ENCODE measurements at regions of chr1 and their contacts with region 1.

Region 1: DNA sequence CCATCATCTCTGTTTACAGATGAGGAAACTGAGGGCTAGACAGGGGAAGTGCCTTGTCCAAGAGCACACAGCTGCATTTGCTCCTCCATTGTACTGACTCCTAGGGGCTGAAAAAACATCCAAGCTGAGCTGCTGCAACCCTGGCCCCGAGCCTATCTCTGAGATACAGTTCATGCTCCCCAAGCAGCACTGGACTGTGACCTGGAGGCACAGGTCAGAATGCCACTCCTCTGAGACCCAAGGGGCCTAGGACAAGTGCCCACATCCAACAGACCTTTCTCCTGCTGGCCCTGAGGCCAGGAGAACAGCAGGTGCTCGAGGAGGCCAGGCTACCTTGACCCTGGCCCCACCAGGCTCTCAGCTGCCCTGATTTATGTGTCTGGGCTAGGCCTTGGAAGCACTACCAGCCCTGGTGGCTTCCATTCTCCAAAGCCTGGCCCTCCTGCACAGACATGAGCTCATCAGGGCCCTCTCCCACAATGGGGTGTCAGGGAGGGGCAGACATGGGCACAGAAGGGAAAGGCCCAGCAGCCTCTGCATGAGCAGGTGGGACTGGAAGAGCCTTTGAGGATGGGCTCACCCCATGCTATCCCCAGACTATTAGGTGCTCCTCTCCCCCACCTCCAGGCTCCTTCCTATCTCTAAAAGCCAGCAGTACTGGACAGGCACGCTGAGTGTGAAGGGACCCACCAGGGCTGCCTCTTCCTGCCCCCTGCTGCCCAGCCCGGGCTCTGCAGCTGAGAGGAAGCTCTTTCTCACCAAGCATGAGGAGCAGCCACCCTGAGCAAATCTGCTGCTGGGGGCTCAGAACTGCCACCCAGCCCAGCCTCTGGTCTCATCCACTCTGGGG is 18.8 kb downstream of the ADGRB2 start:
- DNase-seq: peak; percentile 55
- H3K4me3 ChIP-seq: no peak overlapping the region
- H3K27ac ChIP-seq: no peak overlapping the region
- H3K4me1 ChIP-seq: no peaks in the 10 kb centered on the region
- H3K27me3 ChIP-seq: peaks cover 0 to 4% of the 10 kb centered on the region in 2 experiments
- CTCF ChIP-seq: peak; percentile 77 to 92
- POLR2A ChIP-seq: no peak

Region 2: DNA sequence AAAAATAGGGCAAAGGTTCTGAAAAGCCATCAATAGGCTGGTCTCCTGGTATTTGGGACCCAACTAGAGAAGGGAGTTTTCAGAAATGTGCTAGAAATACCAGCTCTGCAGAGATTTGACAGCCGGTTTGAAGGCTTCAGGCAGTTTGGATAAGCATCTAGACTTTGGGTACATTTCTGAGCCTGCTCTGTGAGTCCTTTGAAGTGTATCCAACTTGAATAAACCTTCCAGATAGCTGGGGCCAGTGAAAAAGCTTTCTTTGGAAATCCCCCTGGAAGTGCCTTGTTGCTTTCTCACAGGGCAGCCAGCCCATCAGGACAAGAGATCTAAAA is 94.3 kb before region 1 on chr1:
- CTCF ChIA-PET with region 1: interaction called, 10 read pairs
- POLR2A ChIA-PET with region 1: no interaction called
- dilution Hi-C with region 1: no loop called
- intact Hi-C with region 1: no loop called
- DNase-seq: no peak
- H3K4me3 ChIP-seq: no peak overlapping the region
- H3K27ac ChIP-seq: no peak overlapping the region
- H3K4me1 ChIP-seq: no peaks in the 10 kb centered on the region
- H3K27me3 ChIP-seq: no peaks in the 10 kb centered on the region
- CTCF ChIP-seq: no peak
- POLR2A ChIP-seq: no peak

Region 3: DNA sequence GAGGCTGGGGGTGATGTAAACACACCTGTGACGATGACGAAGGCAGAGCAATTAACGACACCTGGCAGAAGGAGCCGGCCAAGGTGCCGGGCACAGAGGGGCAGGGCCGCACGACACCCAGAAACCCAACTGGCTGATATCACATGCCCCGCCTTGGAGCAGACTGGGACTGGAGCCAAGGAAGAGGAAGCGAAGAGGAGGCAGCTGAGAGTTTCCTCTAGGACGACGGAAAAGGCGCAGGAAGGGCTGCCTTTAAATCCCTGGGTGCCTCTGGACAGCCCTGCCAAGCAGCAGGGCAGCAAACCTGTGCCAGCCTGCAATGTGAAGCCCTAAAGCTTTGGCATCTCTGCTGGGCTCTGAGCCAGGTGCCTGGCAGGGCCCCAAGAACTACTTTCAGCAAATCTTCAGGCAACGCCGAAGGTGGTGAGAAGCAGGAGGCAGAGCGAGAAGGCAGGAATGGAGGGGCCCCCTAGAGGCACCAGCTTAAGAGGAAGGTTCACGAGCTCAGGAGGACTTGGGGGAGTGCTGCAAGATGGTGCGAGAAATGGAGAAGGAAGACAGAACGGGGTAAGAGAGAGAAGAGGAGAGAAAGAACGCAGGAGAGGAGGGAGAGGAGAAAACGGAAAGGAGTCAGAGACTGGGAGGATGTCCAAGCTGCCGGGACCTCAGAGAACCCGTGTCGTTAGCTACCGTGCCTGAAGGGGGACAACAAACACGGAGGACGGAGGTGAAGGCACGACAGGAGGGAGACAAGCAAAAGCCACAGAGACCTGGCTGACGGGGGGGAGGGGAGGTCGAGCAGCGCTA is 75.3 kb before region 1 on chr1:
- CTCF ChIA-PET with region 1: interaction called, 177 read pairs
- POLR2A ChIA-PET with region 1: no interaction called
- dilution Hi-C with region 1: no loop called
- intact Hi-C with region 1: no loop called
- DNase-seq: peak; percentile 77
- H3K4me3 ChIP-seq: peak overlapping the region; percentile 7 to 31 (median 21)
- H3K27ac ChIP-seq: no peak overlapping the region
- H3K4me1 ChIP-seq: peaks cover 13% of the 10 kb centered on the region
- H3K27me3 ChIP-seq: no peaks in the 10 kb centered on the region
- CTCF ChIP-seq: peak; percentile 10 to 29
- POLR2A ChIP-seq: no peak

Region 4: GRCh38 chr1:31715087-31715872 is 30.0 kb before region 1 on chr1:
- CTCF ChIA-PET with region 1: interaction called, 64 read pairs
- POLR2A ChIA-PET with region 1: no interaction called
- dilution Hi-C with region 1: no loop called
- intact Hi-C with region 1: loop called (anchors 2 kb)
- DNase-seq: peak; percentile 92
- H3K4me3 ChIP-seq: peak overlapping the region in 2 of 3 experiments; percentile 9 to 27
- H3K27ac ChIP-seq: peak overlapping the region; percentile 62
- H3K4me1 ChIP-seq: peaks cover 24% of the 10 kb centered on the region
- H3K27me3 ChIP-seq: peaks cover 0 to 18% of the 10 kb centered on the region in 2 experiments
- CTCF ChIP-seq: peak; percentile 86 to 96
- POLR2A ChIP-seq: no peak

Region 5: DNA sequence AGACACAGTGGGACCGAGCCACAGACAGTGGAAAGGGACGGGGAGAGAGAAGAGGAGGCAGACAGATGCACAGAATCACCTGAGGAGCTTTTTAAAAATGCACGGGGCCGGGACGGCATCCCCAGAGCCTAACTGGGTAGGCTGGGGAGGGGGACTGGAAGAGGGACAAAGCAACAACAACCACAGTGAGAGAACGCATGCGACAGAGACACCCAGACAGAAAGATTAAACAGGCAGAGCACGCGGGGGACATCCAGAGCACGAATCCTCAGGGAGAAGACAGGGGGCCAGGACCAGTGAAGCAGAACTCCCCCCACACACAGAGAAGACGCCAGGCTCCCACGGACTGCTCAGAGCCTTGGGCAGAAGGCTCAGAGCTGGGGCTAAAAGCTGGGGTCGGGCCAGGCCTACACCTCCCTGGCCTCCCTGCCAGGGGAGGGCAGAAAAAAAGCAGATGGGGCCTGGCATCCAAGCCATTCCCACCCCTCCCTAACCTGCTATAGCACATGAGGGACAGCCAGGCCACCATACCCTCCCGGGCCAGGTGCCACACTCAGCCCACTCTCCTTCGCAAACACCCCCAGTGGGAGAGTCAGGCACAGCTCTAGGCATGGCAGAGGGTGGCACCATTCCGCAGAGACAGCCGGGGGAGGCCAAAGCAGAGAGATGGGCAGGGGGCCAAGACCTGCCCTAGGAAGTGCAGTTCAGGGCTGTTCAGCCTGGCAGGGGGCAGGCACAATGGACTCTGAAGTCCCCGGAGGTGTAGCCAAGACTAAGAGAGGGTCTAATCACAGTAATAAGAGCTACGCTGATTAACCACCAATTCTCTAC is 11.7 kb before region 1 on chr1:
- CTCF ChIA-PET with region 1: interaction called, 36 read pairs
- POLR2A ChIA-PET with region 1: no interaction called
- dilution Hi-C with region 1: no loop called
- intact Hi-C with region 1: no loop called
- DNase-seq: no peak
- H3K4me3 ChIP-seq: no peak overlapping the region
- H3K27ac ChIP-seq: no peak overlapping the region
- H3K4me1 ChIP-seq: no peaks in the 10 kb centered on the region
- H3K27me3 ChIP-seq: no peaks in the 10 kb centered on the region
- CTCF ChIP-seq: no peak
- POLR2A ChIP-seq: no peak

Region 6: DNA sequence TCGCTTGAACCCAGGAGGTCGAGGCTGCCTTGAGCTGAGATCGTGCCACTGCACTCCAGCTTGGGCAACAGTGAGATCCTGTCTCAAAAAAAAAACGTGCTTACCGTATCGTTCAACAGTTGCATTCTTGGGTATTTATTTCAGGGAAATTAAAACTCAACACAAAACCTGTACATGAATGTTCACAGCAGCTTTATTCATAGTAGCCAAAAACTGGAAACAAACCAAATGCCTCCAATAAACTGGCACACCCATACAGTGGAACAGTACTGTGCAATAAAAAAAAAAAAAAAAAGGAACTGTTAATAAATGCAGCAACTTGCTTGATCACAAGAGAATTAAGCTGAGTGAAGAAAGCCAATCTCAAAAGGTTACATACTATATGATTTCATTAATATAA is 275.0 kb after region 1 on chr1:
- CTCF ChIA-PET with region 1: no interaction called
- POLR2A ChIA-PET with region 1: no interaction called
- dilution Hi-C with region 1: no loop called
- intact Hi-C with region 1: no loop called
- DNase-seq: no peak
- H3K4me3 ChIP-seq: no peak overlapping the region
- H3K27ac ChIP-seq: no peak overlapping the region
- H3K4me1 ChIP-seq: peaks cover 14% of the 10 kb centered on the region
- H3K27me3 ChIP-seq: no peaks in the 10 kb centered on the region
- CTCF ChIP-seq: no peak
- POLR2A ChIP-seq: no peak